ENCODE measurements at regions of chr22 and their contacts with region 1.

Region 1: GRCh38 chr22:19854778-19855503 is at the starts of genes GNB1L and RTL10:
- DNase-seq: peak; percentile 93 to 95 (median 94)
- H3K4me3 ChIP-seq: peak within 1 kb of the TSS; percentile 77 to 94
- H3K4me3 Mint-ChIP-seq: peak within 1 kb of the TSS; percentile 92 to 98 (median 94)
- H3K27ac ChIP-seq: peak within 1 kb of the TSS; percentile 85
- H3K27ac Mint-ChIP-seq: peak within 1 kb of the TSS; percentile 94 to 96 (median 96)
- H3K4me1 ChIP-seq: peaks cover 43% of the 10 kb centered on the region
- H3K4me1 Mint-ChIP-seq: peaks cover 27 to 66% (median 45%) of the 10 kb centered on the region in 4 donors
- H3K27me3 ChIP-seq: no peaks in the 10 kb centered on the region
- H3K27me3 Mint-ChIP-seq: no peaks in the 10 kb centered on the region
- total RNA-seq, gene GNB1L: 7.9 to 8.7 TPM
- total RNA-seq, gene RTL10: 26.9 to 27.6 TPM

Region 2: GRCh38 chr22:19679522-19680101 is 175.3 kb before region 1 on chr22:
- CTCF ChIA-PET with region 1: no interaction called
- POLR2A ChIA-PET with region 1: no interaction called
- intact Hi-C with region 1: no loop called
- DNase-seq: peak in 4 of 5 donors; percentile 10 to 33 (median 26)
- H3K4me3 ChIP-seq: no peak overlapping the region
- H3K4me3 Mint-ChIP-seq: no peak overlapping the region
- H3K27ac ChIP-seq: no peak overlapping the region
- H3K27ac Mint-ChIP-seq: no peak overlapping the region
- H3K4me1 ChIP-seq: no peaks in the 10 kb centered on the region
- H3K4me1 Mint-ChIP-seq: no peaks in the 10 kb centered on the region
- H3K27me3 ChIP-seq: peaks cover 8% of the 10 kb centered on the region
- H3K27me3 Mint-ChIP-seq: peaks cover 17 to 28% of the 10 kb centered on the region in 2 donors

Region 3: DNA sequence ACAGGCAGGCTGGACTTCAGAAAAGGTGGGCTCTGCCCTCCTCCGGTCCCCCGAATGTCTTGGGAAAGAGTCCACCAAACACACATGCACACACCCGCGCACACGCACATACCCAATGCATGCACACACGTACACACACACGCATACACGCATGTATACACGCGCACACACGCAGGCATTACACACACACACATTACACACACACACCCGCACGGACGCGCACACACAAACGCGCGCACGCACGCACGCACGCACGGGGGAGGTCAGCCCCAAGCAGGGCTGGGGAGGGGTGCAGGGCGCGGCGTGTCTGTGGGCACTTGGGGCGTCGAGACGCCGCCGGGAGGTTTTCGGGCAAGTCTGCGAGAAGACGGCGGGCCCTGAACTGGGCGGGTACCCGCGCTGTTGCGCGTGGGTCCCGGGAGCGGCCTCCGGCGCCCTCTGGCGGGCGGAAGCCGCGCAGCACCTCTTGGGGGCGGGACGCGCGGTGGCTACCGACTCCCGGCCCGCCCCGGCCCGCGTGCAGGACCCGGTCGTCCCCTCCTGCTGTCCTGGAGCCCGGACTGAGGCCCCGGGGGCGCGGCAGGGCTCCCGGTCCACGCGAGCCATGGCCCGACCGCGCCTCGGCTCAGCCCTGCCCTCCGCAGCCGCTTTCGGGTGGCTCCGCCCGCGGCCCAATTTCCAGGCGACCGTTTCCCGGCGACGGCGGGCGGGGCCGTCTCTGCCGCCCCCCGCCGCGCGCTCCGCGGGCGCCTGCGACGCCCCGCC is 137.1 kb before region 1 on chr22:
- CTCF ChIA-PET with region 1: no interaction called
- POLR2A ChIA-PET with region 1: no interaction called
- intact Hi-C with region 1: loop called (anchors 1 kb)
- DNase-seq: peak; percentile 73 to 85 (median 82)
- H3K4me3 ChIP-seq: peak overlapping the region in 1 of 2 donors; percentile 38
- H3K4me3 Mint-ChIP-seq: peak overlapping the region; percentile 44 to 86 (median 78)
- H3K27ac ChIP-seq: no peak overlapping the region
- H3K27ac Mint-ChIP-seq: peak overlapping the region in 1 of 7 donors; percentile 64
- H3K4me1 ChIP-seq: peaks cover 25% of the 10 kb centered on the region
- H3K4me1 Mint-ChIP-seq: peaks cover 2 to 34% (median 8%) of the 10 kb centered on the region in 4 donors
- H3K27me3 ChIP-seq: peaks cover 25% of the 10 kb centered on the region
- H3K27me3 Mint-ChIP-seq: peaks cover 19 to 39% of the 10 kb centered on the region in 2 donors

Region 4: GRCh38 chr22:19844377-19845053 is 10.4 kb before region 1 on chr22:
- CTCF ChIA-PET with region 1: no interaction called
- POLR2A ChIA-PET with region 1: interaction called, 10 read pairs
- intact Hi-C with region 1: no loop called
- DNase-seq: peak in 3 of 5 donors; percentile 14 to 24 (median 21)
- H3K4me3 ChIP-seq: no peak overlapping the region
- H3K4me3 Mint-ChIP-seq: peak overlapping the region in 7 of 8 donors; percentile 39 to 70 (median 43)
- H3K27ac ChIP-seq: peak overlapping the region; percentile 4
- H3K27ac Mint-ChIP-seq: peak overlapping the region; percentile 63 to 83 (median 74)
- H3K4me1 ChIP-seq: peaks cover 20% of the 10 kb centered on the region
- H3K4me1 Mint-ChIP-seq: peaks cover 12 to 27% (median 24%) of the 10 kb centered on the region in 4 donors
- H3K27me3 ChIP-seq: no peaks in the 10 kb centered on the region
- H3K27me3 Mint-ChIP-seq: no peaks in the 10 kb centered on the region

Region 5: DNA sequence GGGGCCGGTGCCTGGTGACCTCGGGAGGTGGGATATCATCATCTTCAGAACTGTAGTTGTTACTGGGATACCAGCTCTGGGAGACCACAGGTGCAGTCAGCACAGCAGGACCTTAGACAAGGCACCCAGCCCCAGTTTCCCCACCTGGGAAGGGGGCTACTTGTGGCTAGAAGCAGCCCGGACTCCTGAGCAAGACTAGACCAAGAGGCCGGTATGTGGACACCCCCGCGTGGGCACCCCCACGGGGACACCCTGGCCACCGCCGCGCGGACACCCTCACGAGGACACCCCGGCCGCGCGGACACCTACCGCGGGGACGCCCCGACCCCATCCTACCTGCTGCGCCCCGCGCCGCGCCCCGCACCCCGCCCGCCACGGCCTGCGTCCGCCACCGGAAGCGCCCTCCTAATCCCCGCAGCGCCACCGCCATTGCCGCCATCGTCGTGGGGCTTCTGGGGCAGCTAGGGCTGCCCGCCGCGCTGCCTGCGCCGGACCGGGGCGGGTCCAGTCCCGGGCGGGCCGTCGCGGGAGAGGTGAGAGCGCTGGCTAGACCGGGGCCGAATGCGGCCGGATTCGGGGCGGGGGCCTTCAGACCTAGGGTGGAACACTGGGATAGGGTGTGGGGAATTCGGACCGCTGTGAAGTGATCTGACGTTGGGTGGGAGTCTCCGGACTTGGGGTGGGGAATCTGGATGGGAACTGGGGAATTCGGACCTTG is 86.6 kb after region 1 on chr22 and contains the starts of genes COMT and TXNRD2:
- CTCF ChIA-PET with region 1: no interaction called
- POLR2A ChIA-PET with region 1: interaction called, 17 read pairs
- intact Hi-C with region 1: no loop called
- DNase-seq: peak; percentile 61 to 70 (median 69)
- H3K4me3 ChIP-seq: peak within 1 kb of the TSS; percentile 72 to 91
- H3K4me3 Mint-ChIP-seq: peak within 1 kb of the TSS; percentile 92 to 96 (median 94)
- H3K27ac ChIP-seq: peak within 1 kb of the TSS; percentile 80
- H3K27ac Mint-ChIP-seq: peak within 1 kb of the TSS; percentile 85 to 97 (median 96)
- H3K4me1 ChIP-seq: peaks cover 31% of the 10 kb centered on the region
- H3K4me1 Mint-ChIP-seq: peaks cover 22 to 49% (median 39%) of the 10 kb centered on the region in 4 donors
- H3K27me3 ChIP-seq: no peaks in the 10 kb centered on the region
- H3K27me3 Mint-ChIP-seq: no peaks in the 10 kb centered on the region
- total RNA-seq, gene COMT: 36.8 to 39.2 TPM
- total RNA-seq, gene TXNRD2: 34.2 to 35.9 TPM